PC-9 (cell line): ENCODE measurements at regions of chr9 and their contacts with region 1.

Region 1: GRCh38 chr9:109440797-109441287 is 57.3 kb downstream of the PTPN3 start:
- DNase-seq: peak; percentile 47 to 76
- H3K4me3 ChIP-seq: no peak overlapping the region
- H3K27ac ChIP-seq: peak overlapping the region; percentile 28
- H3K4me1 ChIP-seq: peaks cover 21% of the 10 kb centered on the region
- H3K27me3 ChIP-seq: no peaks in the 10 kb centered on the region
- CTCF ChIP-seq: peak; percentile 86

Region 2: GRCh38 chr9:108105885-108106284 is 1335.0 kb before region 1 on chr9:
- CTCF ChIA-PET with region 1: no interaction called
- POLR2A ChIA-PET with region 1: no interaction called
- intact Hi-C with region 1: no loop called
- DNase-seq: no peak
- H3K4me3 ChIP-seq: no peak overlapping the region
- H3K27ac ChIP-seq: no peak overlapping the region
- H3K4me1 ChIP-seq: peaks cover 2% of the 10 kb centered on the region
- H3K27me3 ChIP-seq: no peaks in the 10 kb centered on the region
- CTCF ChIP-seq: no peak

Region 3: GRCh38 chr9:109520478-109521132 is 79.8 kb after region 1 on chr9:
- CTCF ChIA-PET with region 1: no interaction called
- POLR2A ChIA-PET with region 1: no interaction called
- intact Hi-C with region 1: loop called (anchors 1 kb)
- DNase-seq: peak; percentile 71 to 91
- H3K4me3 ChIP-seq: no peak overlapping the region
- H3K27ac ChIP-seq: peak overlapping the region; percentile 61
- H3K4me1 ChIP-seq: peaks cover 46% of the 10 kb centered on the region
- H3K27me3 ChIP-seq: no peaks in the 10 kb centered on the region
- CTCF ChIP-seq: peak; percentile 95

Region 4: GRCh38 chr9:109652964-109653363 is 212.1 kb after region 1 on chr9:
- CTCF ChIA-PET with region 1: no interaction called
- POLR2A ChIA-PET with region 1: no interaction called
- intact Hi-C with region 1: loop called (anchors 1 kb)
- DNase-seq: peak; percentile 43 to 59
- H3K4me3 ChIP-seq: no peak overlapping the region
- H3K27ac ChIP-seq: no peak overlapping the region
- H3K4me1 ChIP-seq: peaks cover 18% of the 10 kb centered on the region
- H3K27me3 ChIP-seq: no peaks in the 10 kb centered on the region
- CTCF ChIP-seq: peak; percentile 68

Region 5: GRCh38 chr9:109880277-109881169 is 439.7 kb after region 1 on chr9:
- CTCF ChIA-PET with region 1: no interaction called
- POLR2A ChIA-PET with region 1: no interaction called
- intact Hi-C with region 1: loop called (anchors 10 kb)
- DNase-seq: no peak
- H3K4me3 ChIP-seq: no peak overlapping the region
- H3K27ac ChIP-seq: no peak overlapping the region
- H3K4me1 ChIP-seq: no peaks in the 10 kb centered on the region
- H3K27me3 ChIP-seq: no peaks in the 10 kb centered on the region
- CTCF ChIP-seq: peak; percentile 67